Colonic mucosa (tissue), 4 donors: ENCODE measurements at regions of chrX and their contacts with region 1.

Region 1: GRCh38 chrX:17374619-17375366 is at the start of gene NHS:
- DNase-seq: peak; percentile 70
- H3K4me3 ChIP-seq: peak within 1 kb of the TSS; percentile 39
- H3K27ac ChIP-seq: peak within 1 kb of the TSS; percentile 13
- H3K4me1 ChIP-seq: no peaks in the 10 kb centered on the region
- H3K27me3 ChIP-seq: peaks cover 5% of the 10 kb centered on the region
- CTCF ChIP-seq: peak; percentile 41
- total RNA-seq, gene NHS: 3.0 to 4.3 TPM

Region 2: GRCh38 chrX:17459008-17459611 is 84.3 kb after region 1 on chrX:
- intact Hi-C with region 1: no loop called
- DNase-seq: no peak
- H3K4me3 ChIP-seq: no peak overlapping the region
- H3K27ac ChIP-seq: no peak overlapping the region
- H3K4me1 ChIP-seq: no peaks in the 10 kb centered on the region
- H3K27me3 ChIP-seq: no peaks in the 10 kb centered on the region
- CTCF ChIP-seq: no peak

Region 3: DNA sequence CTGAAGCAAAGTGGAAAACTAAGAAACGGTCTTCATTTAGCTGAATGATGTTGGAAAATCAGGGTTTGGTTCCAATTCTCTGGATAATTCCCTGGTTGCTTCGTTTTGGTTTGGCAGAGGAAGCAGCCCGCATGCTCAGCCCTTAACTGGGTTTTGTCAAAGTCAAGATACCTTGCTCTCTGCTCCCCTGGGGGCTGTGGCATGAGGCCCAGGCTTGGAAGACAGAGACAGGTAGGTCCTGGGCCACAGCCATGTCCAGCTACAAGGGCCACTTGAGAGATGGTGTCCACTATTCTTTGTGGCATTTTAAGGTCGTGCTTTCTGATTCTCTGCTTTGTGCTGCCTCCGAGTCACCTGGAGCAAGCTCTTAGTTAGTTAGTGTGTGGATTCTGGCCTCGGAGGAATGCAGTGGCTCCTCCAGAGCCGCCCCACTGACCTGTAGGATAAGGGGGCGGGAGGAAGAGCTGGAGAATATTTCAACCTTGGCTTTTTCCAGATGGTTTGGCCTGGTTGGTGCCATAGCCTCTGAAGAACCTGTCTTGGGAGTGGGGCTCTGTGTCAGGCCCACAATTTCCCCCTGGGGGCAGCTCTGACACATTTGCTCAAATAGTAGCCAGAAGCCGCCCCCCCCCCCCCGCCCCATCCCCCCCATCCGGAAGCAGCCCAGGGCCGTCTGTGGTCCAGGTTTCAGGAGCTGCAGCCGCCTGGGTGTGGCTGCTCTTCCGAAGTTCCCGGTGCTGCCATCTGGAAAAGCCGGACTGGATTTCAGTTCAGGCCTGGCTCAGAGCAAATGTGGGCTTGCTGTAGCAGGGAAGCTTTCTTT is 147.3 kb after region 1 on chrX:
- intact Hi-C with region 1: loop called (anchors 10 kb)
- DNase-seq: peak; percentile 62
- H3K4me3 ChIP-seq: no peak overlapping the region
- H3K27ac ChIP-seq: no peak overlapping the region
- H3K4me1 ChIP-seq: no peaks in the 10 kb centered on the region
- H3K27me3 ChIP-seq: no peaks in the 10 kb centered on the region
- CTCF ChIP-seq: no peak

Region 4: DNA sequence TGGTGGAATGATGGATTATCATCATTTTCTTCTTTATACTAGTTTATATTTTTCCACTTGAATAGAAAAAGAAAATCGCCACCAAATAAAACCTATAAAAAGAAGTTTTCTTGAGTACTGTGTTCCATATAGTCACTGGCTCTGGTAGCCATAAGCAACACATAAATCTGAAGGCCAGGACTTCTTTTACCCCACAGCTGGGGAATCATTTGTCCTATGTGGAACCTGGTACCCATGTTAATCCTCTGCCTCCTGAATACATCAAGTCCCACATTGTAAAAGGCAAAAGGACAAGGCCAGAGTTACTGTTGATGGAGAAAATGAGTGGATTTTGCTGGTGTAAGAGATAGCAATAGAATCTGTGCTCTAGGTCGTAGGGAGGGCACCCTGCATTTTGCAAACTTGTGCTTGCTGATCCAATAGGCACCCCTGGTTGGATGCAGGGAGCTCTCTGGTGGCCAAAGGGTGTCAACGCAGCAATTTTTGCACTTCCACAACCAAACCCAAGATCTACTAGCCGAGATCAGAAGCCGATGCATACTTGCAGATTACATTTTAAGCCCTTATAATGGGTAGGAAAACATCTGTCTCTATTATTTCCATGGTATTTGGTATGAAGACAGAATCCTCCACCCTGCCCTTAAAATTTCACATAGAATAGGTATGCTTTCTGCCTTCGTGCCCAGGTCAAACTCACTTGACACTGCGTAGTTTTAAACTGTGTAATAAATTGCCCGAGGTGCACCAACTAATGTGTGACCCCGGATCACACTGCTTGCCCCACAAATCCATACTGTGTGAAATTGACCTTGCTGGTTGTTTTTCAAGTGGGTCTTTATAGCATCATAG is 216.3 kb after region 1 on chrX:
- intact Hi-C with region 1: loop called (anchors 5 kb)
- DNase-seq: peak; percentile 64
- H3K4me3 ChIP-seq: no peak overlapping the region
- H3K27ac ChIP-seq: no peak overlapping the region
- H3K4me1 ChIP-seq: no peaks in the 10 kb centered on the region
- H3K27me3 ChIP-seq: no peaks in the 10 kb centered on the region
- CTCF ChIP-seq: peak; percentile 52